CD8-positive, alpha-beta T cell (primary cell): ENCODE measurements at regions of chr1 and their contacts with region 1.

Region 1: GRCh38 chr1:27725374-27726173 is at the start of gene FAM76A:
- DNase-seq: peak; percentile 99 to 100 (median 99)
- ATAC-seq: peak; percentile 92
- H3K4me3 ChIP-seq: peak within 1 kb of the TSS; percentile 63 to 92
- H3K4me3 Mint-ChIP-seq: peak within 1 kb of the TSS; percentile 84
- H3K27ac ChIP-seq: peak within 1 kb of the TSS; percentile 94 to 96
- H3K27ac Mint-ChIP-seq: peak within 1 kb of the TSS; percentile 94
- H3K4me1 ChIP-seq: peaks cover 15% of the 10 kb centered on the region
- H3K4me1 Mint-ChIP-seq: peaks cover 26% of the 10 kb centered on the region
- H3K27me3 ChIP-seq: no peaks in the 10 kb centered on the region
- H3K27me3 Mint-ChIP-seq: no peaks in the 10 kb centered on the region
- CTCF ChIP-seq: peak; percentile 25
- total RNA-seq, gene FAM76A: 29.5 to 31.7 TPM

Region 2: DNA sequence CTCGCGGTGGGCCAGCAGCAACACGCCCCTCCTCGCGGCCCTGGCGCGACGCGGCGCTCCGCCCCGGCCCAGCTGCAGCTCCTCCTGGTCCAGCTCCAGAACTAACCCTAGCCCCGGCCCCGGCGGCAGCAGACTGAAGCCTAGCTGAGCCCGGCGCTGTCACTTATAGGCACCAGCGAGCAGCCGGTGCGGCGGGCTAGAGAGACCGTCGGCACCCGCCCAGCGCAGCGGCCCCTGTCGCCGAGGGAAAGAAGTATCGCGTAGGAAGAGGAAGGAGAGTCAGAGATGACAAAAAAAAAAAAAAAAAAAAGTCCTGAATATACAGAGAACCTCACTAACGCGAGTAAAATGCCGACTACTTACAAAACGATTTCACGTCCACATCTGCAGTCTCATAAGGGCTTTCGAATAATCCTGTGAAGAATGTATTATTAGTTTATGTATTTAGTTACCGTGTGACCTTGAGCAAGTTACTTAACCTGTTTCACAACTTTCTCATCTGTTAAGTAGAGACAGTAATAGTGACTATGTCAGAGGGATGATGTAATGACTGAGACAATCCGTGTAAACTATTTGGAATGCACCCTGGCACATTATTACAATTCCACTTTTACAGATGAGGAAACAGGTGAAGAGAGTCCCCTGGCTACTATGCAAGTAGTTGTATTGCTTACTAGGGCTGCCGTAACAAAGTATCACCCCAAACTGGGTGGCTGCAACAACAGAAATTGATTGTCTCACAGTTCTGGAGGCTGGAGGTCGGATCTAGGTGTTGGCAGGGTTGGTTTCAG is 570.4 kb before region 1 on chr1 and contains the start of gene SLC9A1:
- CTCF ChIA-PET with region 1: no interaction called
- POLR2A ChIA-PET with region 1: no interaction called
- intact Hi-C with region 1: loop called in 1 of 2 experiments (anchors 2 kb)
- DNase-seq: peak; percentile 88 to 96 (median 91)
- ATAC-seq: peak; percentile 94
- H3K4me3 ChIP-seq: peak within 1 kb of the TSS; percentile 75 to 83
- H3K4me3 Mint-ChIP-seq: peak within 1 kb of the TSS; percentile 81
- H3K27ac ChIP-seq: peak within 1 kb of the TSS; percentile 92 to 100
- H3K27ac Mint-ChIP-seq: peak within 1 kb of the TSS; percentile 99
- H3K4me1 ChIP-seq: peaks cover 40% of the 10 kb centered on the region
- H3K4me1 Mint-ChIP-seq: peaks cover 45% of the 10 kb centered on the region
- H3K27me3 ChIP-seq: no peaks in the 10 kb centered on the region
- H3K27me3 Mint-ChIP-seq: no peaks in the 10 kb centered on the region
- CTCF ChIP-seq: peak; percentile 82
- total RNA-seq, gene SLC9A1: 17.9 to 18.3 TPM

Region 3: GRCh38 chr1:27321813-27322577 is 403.6 kb before region 1 on chr1 and contains the start of gene TMEM222:
- CTCF ChIA-PET with region 1: no interaction called
- POLR2A ChIA-PET with region 1: no interaction called
- intact Hi-C with region 1: loop called (anchors 1 to 2 kb)
- DNase-seq: peak; percentile 95 to 99 (median 97)
- ATAC-seq: peak; percentile 93
- H3K4me3 ChIP-seq: peak within 1 kb of the TSS; percentile 95 to 99
- H3K4me3 Mint-ChIP-seq: peak within 1 kb of the TSS; percentile 98
- H3K27ac ChIP-seq: peak within 1 kb of the TSS; percentile 88 to 95
- H3K27ac Mint-ChIP-seq: peak within 1 kb of the TSS; percentile 97
- H3K4me1 ChIP-seq: peaks cover 40% of the 10 kb centered on the region
- H3K4me1 Mint-ChIP-seq: peaks cover 48% of the 10 kb centered on the region
- H3K27me3 ChIP-seq: no peaks in the 10 kb centered on the region
- H3K27me3 Mint-ChIP-seq: no peaks in the 10 kb centered on the region
- CTCF ChIP-seq: no peak
- total RNA-seq, gene TMEM222: 24.1 to 25.2 TPM

Region 4: GRCh38 chr1:27568300-27569087 is 157.1 kb before region 1 on chr1:
- CTCF ChIA-PET with region 1: no interaction called
- POLR2A ChIA-PET with region 1: no interaction called
- intact Hi-C with region 1: loop called in 1 of 2 experiments (anchors 1 kb)
- DNase-seq: peak; percentile 80 to 96 (median 91)
- ATAC-seq: peak; percentile 92
- H3K4me3 ChIP-seq: peak overlapping the region; percentile 28 to 36
- H3K4me3 Mint-ChIP-seq: peak overlapping the region; percentile 78
- H3K27ac ChIP-seq: peak overlapping the region in 1 of 2 experiments; percentile 58
- H3K27ac Mint-ChIP-seq: peak overlapping the region; percentile 39
- H3K4me1 ChIP-seq: peaks cover 16% of the 10 kb centered on the region
- H3K4me1 Mint-ChIP-seq: peaks cover 25% of the 10 kb centered on the region
- H3K27me3 ChIP-seq: no peaks in the 10 kb centered on the region
- H3K27me3 Mint-ChIP-seq: no peaks in the 10 kb centered on the region
- CTCF ChIP-seq: peak; percentile 71

Region 5: DNA sequence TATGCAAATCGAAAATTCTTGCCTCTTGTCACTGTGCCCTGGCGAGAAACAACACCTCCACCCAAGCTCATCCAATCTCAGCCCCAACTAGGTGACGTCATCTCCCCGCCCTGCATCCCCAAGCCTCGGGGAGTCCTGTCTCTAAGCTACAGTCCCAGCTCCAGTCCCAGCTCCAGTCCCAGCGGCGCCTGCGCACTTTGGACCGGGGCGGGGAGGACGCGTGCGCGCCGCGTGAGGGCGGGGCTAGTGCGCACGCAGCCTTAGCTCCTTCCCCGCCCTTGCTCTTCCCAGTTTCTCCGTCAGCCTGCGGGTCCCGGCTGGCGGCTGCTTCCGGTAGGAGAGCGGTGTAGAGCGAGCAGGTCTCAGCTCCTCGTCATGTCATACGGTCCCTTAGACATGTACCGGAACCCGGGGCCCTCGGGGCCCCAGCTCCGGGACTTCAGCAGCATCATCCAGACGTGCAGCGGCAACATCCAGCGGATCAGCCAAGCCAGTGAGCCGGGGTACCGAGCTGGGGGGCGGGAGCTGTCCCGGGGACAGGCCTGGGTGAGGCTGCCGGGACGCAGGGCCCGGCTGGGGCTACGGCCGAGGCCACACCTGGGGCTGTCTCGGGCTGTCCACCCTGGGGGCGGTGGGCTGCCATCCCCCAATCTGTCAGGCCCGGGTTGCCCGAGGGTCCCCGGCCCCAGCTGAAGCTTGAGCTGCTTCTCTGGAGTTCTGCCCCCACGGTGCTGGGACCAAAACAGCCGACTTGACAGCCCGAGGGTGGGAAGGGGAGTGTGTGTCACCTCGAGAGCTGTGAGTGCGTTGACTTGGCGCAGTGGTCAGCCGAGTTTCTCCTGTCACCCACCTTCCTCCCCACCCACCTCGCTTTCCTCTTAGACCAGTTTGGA is 47.6 kb after region 1 on chr1 and contains the start of gene STX12:
- CTCF ChIA-PET with region 1: no interaction called
- POLR2A ChIA-PET with region 1: interaction called, 14 read pairs
- intact Hi-C with region 1: loop called (anchors 1 kb)
- DNase-seq: peak; percentile 96 to 100 (median 98)
- ATAC-seq: peak; percentile 91
- H3K4me3 ChIP-seq: peak within 1 kb of the TSS; percentile 94 to 98
- H3K4me3 Mint-ChIP-seq: peak within 1 kb of the TSS; percentile 91
- H3K27ac ChIP-seq: peak within 1 kb of the TSS; percentile 76 to 94
- H3K27ac Mint-ChIP-seq: peak within 1 kb of the TSS; percentile 98
- H3K4me1 ChIP-seq: peaks cover 16% of the 10 kb centered on the region
- H3K4me1 Mint-ChIP-seq: peaks cover 37% of the 10 kb centered on the region
- H3K27me3 ChIP-seq: no peaks in the 10 kb centered on the region
- H3K27me3 Mint-ChIP-seq: no peaks in the 10 kb centered on the region
- CTCF ChIP-seq: no peak
- total RNA-seq, gene STX12: 21.0 to 26.0 TPM

Region 6: GRCh38 chr1:28088168-28088961 is 362.8 kb after region 1 on chr1 and contains the start of gene EYA3:
- CTCF ChIA-PET with region 1: no interaction called
- POLR2A ChIA-PET with region 1: no interaction called
- intact Hi-C with region 1: no loop called
- DNase-seq: peak; percentile 97 to 100 (median 99)
- ATAC-seq: peak; percentile 95
- H3K4me3 ChIP-seq: peak within 1 kb of the TSS; percentile 72 to 84
- H3K4me3 Mint-ChIP-seq: peak within 1 kb of the TSS; percentile 85
- H3K27ac ChIP-seq: peak within 1 kb of the TSS; percentile 58 to 89
- H3K27ac Mint-ChIP-seq: peak within 1 kb of the TSS; percentile 97
- H3K4me1 ChIP-seq: peaks cover 25% of the 10 kb centered on the region
- H3K4me1 Mint-ChIP-seq: peaks cover 45% of the 10 kb centered on the region
- H3K27me3 ChIP-seq: no peaks in the 10 kb centered on the region
- H3K27me3 Mint-ChIP-seq: peaks cover 3% of the 10 kb centered on the region
- CTCF ChIP-seq: no peak
- total RNA-seq, gene EYA3: 4.9 to 5.2 TPM

Region 7: GRCh38 chr1:28235755-28236655 is 510.4 kb after region 1 on chr1 and contains the start of gene ATP5IF1:
- CTCF ChIA-PET with region 1: interaction called, 5 read pairs
- POLR2A ChIA-PET with region 1: interaction called, 11 read pairs
- intact Hi-C with region 1: no loop called
- DNase-seq: peak; percentile 90 to 98 (median 94)
- ATAC-seq: peak; percentile 95
- H3K4me3 ChIP-seq: peak within 1 kb of the TSS; percentile 80 to 96
- H3K4me3 Mint-ChIP-seq: no peak within 1 kb of the TSS
- H3K27ac ChIP-seq: peak within 1 kb of the TSS; percentile 84 to 96
- H3K27ac Mint-ChIP-seq: no peak within 1 kb of the TSS
- H3K4me1 ChIP-seq: peaks cover 41% of the 10 kb centered on the region
- H3K4me1 Mint-ChIP-seq: peaks cover 21% of the 10 kb centered on the region
- H3K27me3 ChIP-seq: no peaks in the 10 kb centered on the region
- H3K27me3 Mint-ChIP-seq: no peaks in the 10 kb centered on the region
- CTCF ChIP-seq: no peak
- total RNA-seq, gene ATP5IF1: 66.1 to 69.3 TPM